Activated B cell treated with CpG ODN at 0.5 μM for 24 hours (primary cell): ENCODE measurements at regions of chr13 and their contacts with region 1.

Region 1: GRCh38 chr13:44988973-44989817 is at the starts of genes GPALPP1 and NUFIP1:
- DNase-seq: peak; percentile 80
- ATAC-seq: peak; percentile 97
- H3K4me3 Mint-ChIP-seq: peak within 1 kb of the TSS; percentile 99
- H3K27ac Mint-ChIP-seq: peak within 1 kb of the TSS; percentile 98
- H3K4me1 Mint-ChIP-seq: peaks cover 37% of the 10 kb centered on the region
- H3K27me3 Mint-ChIP-seq: no peaks in the 10 kb centered on the region
- CTCF ChIP-seq: no peak
- total RNA-seq, gene GPALPP1: 28.8 and 35.8 TPM in 2 replicates
- total RNA-seq, gene NUFIP1: 6.6 and 7.8 TPM in 2 replicates

Region 2: DNA sequence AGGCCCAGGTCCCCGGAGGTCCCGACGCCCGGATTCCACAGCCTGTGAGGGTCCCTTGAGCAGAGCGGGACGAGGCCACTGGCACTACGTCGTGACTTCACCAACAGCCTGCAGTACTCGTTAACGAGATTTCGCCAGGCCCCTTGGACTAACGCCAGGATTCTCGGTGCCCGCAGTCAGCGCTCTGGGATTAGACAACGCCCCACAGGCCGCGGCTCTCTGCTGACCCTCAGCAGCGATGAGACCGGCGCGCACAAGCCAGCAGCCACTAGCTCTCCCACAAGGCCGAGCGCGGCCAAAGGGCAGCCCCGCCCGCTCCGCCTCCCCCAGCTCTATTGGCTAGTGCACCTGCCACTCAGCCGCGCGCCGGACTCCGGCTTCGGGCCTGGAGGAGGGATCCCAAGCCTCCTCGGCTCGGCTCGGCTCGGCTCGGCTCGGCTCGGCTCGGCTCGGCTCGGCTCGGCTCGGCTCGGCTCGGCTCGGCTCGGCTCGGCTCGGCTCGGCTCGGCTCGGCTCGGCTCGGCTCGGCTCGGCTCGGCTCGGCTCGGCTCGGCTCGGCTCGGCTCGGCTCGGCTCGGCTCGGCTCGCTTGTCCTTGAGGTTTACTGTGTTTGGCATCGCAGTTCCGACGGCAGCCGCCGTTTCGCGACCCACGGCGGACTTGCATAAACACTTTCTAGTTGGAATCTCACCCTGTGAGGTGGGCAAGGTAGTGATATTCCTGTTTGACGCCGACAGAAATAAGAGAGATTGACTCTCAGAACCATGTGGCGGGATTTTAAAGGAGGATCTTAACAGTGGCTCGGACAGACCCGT is 847.3 kb before region 1 on chr13:
- CTCF ChIA-PET with region 1: no interaction called
- POLR2A ChIA-PET with region 1: no interaction called
- intact Hi-C with region 1: loop called (anchors 10 kb)
- DNase-seq: peak; percentile 100
- ATAC-seq: peak; percentile 99
- H3K4me3 Mint-ChIP-seq: peak overlapping the region; percentile 93
- H3K27ac Mint-ChIP-seq: peak overlapping the region; percentile 86
- H3K4me1 Mint-ChIP-seq: peaks cover 29% of the 10 kb centered on the region
- H3K27me3 Mint-ChIP-seq: peaks cover 8% of the 10 kb centered on the region
- CTCF ChIP-seq: no peak

Region 3: GRCh38 chr13:44274452-44275205 is 714.6 kb before region 1 on chr13:
- CTCF ChIA-PET with region 1: no interaction called
- POLR2A ChIA-PET with region 1: no interaction called
- intact Hi-C with region 1: loop called (anchors 1 kb)
- DNase-seq: no peak
- ATAC-seq: peak; percentile 86
- H3K4me3 Mint-ChIP-seq: peak overlapping the region; percentile 56
- H3K27ac Mint-ChIP-seq: peak overlapping the region; percentile 67
- H3K4me1 Mint-ChIP-seq: peaks cover 44% of the 10 kb centered on the region
- H3K27me3 Mint-ChIP-seq: peaks cover 2% of the 10 kb centered on the region
- CTCF ChIP-seq: no peak

Region 4: GRCh38 chr13:45119991-45120864 is 131.0 kb after region 1 on chr13 and contains the start of gene GTF2F2:
- CTCF ChIA-PET with region 1: no interaction called
- POLR2A ChIA-PET with region 1: no interaction called
- intact Hi-C with region 1: loop called (anchors 2 kb)
- DNase-seq: peak; percentile 90
- ATAC-seq: peak; percentile 82
- H3K4me3 Mint-ChIP-seq: no peak within 1 kb of the TSS
- H3K27ac Mint-ChIP-seq: no peak within 1 kb of the TSS
- H3K4me1 Mint-ChIP-seq: peaks cover 9% of the 10 kb centered on the region
- H3K27me3 Mint-ChIP-seq: no peaks in the 10 kb centered on the region
- CTCF ChIP-seq: no peak
- total RNA-seq, gene GTF2F2: 19.4 and 19.8 TPM in 2 replicates